ENCODE measurements at regions of chr12 and their contacts with region 1.

Region 1: DNA sequence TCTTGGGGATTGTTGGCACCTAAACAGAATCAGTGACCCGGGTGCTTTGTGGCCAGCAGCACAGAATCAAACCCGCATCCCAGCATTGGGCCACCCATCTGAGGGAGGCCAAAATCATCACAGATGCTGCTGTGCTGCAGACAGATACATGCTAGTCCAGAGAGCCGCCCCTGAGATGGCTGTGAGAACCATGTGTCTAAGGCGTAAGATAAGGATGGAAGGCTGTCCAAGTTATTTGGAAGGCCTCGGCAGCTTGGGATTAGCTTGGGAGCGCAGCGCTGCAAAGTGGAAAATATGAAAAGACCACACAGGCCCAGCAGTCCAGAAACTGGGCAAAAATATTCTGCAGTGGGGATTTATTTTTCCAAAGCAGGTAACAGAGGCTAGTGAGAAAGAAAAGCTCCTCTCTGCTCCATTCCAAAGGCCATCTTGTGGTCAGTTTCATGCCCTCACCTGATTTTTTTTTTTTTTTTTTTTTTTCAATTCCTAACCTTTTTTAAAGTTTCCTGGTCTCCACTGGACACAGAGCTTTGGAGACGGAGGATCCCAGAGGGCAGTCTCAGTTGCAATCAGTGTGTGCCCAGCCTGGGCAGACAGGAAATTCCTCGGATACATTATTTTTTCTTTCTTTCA is 178.9 kb upstream of the BCL2L14 start:
- DNase-seq: no peak
- H3K4me3 ChIP-seq: no peak overlapping the region
- H3K27ac ChIP-seq: peak overlapping the region; percentile 98
- H3K4me1 ChIP-seq: peaks cover 81% of the 10 kb centered on the region
- CTCF ChIP-seq: peak; percentile 53

Region 2: GRCh38 chr12:11753150-11753499 is 138.7 kb before region 1 on chr12:
- CTCF ChIA-PET with region 1: no interaction called
- POLR2A ChIA-PET with region 1: interaction called, 3 read pairs
- intact Hi-C with region 1: loop called (anchors 2 kb)
- DNase-seq: peak; percentile 93
- H3K4me3 ChIP-seq: peak overlapping the region; percentile 40
- H3K27ac ChIP-seq: peak overlapping the region; percentile 100
- H3K4me1 ChIP-seq: peaks cover 100% of the 10 kb centered on the region
- CTCF ChIP-seq: no peak

Region 3: GRCh38 chr12:11836282-11837151 is 55.4 kb before region 1 on chr12:
- CTCF ChIA-PET with region 1: no interaction called
- POLR2A ChIA-PET with region 1: no interaction called
- intact Hi-C with region 1: loop called (anchors 5 kb)
- DNase-seq: peak; percentile 95
- H3K4me3 ChIP-seq: peak overlapping the region; percentile 37
- H3K27ac ChIP-seq: peak overlapping the region; percentile 91
- H3K4me1 ChIP-seq: peaks cover 72% of the 10 kb centered on the region
- CTCF ChIP-seq: 0 out of 2 replicates have a peak, but pooled peaks have one; percentile 8

Region 4: GRCh38 chr12:12008931-12009611 is 117.2 kb after region 1 on chr12:
- CTCF ChIA-PET with region 1: no interaction called
- POLR2A ChIA-PET with region 1: no interaction called
- intact Hi-C with region 1: loop called (anchors 5 kb)
- DNase-seq: peak; percentile 78
- H3K4me3 ChIP-seq: no peak overlapping the region
- H3K27ac ChIP-seq: peak overlapping the region; percentile 67
- H3K4me1 ChIP-seq: peaks cover 58% of the 10 kb centered on the region
- CTCF ChIP-seq: no peak; the same call in 1 of the 2 replicates